Posterior vena cava (tissue), 2 donors: ENCODE measurements at regions of chr14 and their contacts with region 1.

Region 1: GRCh38 chr14:64955297-64955696 is 12.8 kb upstream of the GPX2 start:
- DNase-seq: peak; percentile 47

Region 2: GRCh38 chr14:63952933-63953437 is 1002.3 kb before region 1 on chr14:
- intact Hi-C with region 1: no loop called
- DNase-seq: no peak

Region 3: DNA sequence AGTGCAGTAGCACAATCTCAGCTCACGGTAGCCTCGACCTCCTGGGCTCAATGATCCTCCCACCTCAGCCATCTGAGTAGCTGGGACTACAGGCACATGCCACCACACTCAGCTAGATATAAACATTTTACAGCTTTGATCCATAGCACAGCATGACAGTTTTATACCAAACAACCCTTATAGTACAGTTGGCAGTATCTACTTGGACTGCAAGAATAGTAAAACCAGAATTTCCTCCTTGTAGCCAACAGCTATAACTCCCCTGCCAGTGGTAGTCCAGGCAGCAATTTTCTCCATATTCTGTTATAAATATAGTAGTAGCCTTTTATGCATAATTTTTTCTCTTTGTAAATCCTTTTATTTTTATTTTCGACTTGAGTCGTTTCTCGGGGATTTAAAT is 774.3 kb after region 1 on chr14:
- intact Hi-C with region 1: loop called in 1 of 2 experiments (anchors 5 kb)
- DNase-seq: no peak